ENCODE measurements at regions of chr5 and their contacts with region 1.

Region 1: GRCh38 chr5:5421961-5422818 is at the start of gene ICE1:
- DNase-seq: peak; percentile 95
- ATAC-seq: peak; percentile 91
- H3K4me3 Mint-ChIP-seq: peak within 1 kb of the TSS; percentile 90
- H3K27ac Mint-ChIP-seq: peak within 1 kb of the TSS; percentile 91
- H3K4me1 Mint-ChIP-seq: peaks cover 12% of the 10 kb centered on the region
- H3K27me3 Mint-ChIP-seq: no peaks in the 10 kb centered on the region
- total RNA-seq, gene ICE1: 26.5 to 27.4 TPM

Region 2: DNA sequence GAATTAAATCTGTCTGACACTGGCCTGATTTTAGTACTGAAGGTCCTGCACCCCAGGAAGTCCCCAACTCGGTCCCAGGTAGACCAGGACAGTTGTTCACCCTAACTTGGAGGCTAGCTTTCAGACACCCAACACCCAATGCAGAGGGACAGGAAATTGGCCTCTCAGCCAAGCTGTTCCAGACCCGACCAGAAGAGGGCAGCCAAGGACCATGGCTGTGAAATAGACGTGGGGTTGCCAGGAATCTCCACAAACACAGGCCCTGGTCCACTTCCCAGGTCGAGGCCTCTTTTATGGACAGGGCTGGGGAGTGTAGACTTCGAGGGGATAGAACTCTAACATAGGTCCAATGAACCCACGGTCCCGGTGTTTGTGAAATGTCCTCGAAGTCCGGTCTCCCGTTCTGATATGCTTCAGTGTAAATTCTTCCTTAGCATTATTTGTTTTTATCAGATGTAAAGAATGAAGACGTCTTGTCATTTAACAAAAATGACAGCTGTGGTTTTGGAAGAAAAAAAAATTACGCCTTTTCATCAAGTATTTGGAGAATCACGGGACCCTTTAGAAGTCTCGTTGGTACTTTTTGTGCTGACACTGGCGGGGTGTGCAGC is 542.4 kb before region 1 on chr5:
- CTCF ChIA-PET with region 1: interaction called, 3 read pairs
- POLR2A ChIA-PET with region 1: no interaction called
- intact Hi-C with region 1: loop called in 1 of 2 experiments (anchors 10 kb)
- DNase-seq: peak; percentile 78
- ATAC-seq: peak; percentile 53
- H3K4me3 Mint-ChIP-seq: no peak overlapping the region
- H3K27ac Mint-ChIP-seq: no peak overlapping the region
- H3K4me1 Mint-ChIP-seq: no peaks in the 10 kb centered on the region
- H3K27me3 Mint-ChIP-seq: no peaks in the 10 kb centered on the region

Region 3: DNA sequence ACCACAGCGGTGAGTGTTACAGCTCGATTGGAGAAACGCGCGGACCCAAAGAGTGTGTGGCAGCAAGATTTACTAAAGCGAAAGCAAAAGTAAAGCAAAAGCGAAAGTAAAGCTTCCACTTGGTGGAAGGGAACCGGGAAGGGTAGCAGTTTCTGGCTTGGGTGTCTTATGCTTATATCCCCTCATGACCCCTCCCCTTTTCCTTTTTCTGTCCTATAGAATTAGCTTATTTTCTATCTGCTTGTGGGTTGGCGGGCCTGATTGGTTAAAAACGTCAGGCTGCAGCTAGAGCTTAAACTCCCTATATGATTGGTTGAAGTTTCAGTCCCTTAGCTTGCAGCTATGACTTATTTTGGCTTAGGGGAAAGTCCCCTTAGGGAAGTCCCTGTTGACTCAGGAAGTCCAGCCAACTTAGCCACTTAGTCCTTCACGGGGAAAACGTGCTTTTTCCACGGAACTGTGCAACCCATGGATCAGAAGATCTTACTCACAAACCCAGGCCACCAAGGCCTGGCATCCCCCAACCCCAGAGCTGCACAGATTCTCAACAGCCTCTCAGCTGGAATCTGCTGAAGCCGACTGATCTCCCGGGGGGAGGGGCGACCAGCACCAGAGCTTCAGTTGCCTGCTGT is 396.3 kb before region 1 on chr5:
- CTCF ChIA-PET with region 1: no interaction called
- POLR2A ChIA-PET with region 1: no interaction called
- intact Hi-C with region 1: loop called in 1 of 2 experiments (anchors 5 kb)
- DNase-seq: peak; percentile 33
- ATAC-seq: no peak
- H3K4me3 Mint-ChIP-seq: no peak overlapping the region
- H3K27ac Mint-ChIP-seq: no peak overlapping the region
- H3K4me1 Mint-ChIP-seq: peaks cover 7% of the 10 kb centered on the region
- H3K27me3 Mint-ChIP-seq: no peaks in the 10 kb centered on the region

Region 4: GRCh38 chr5:5141625-5142532 is 280.3 kb before region 1 on chr5:
- CTCF ChIA-PET with region 1: interaction called, 4 read pairs
- POLR2A ChIA-PET with region 1: no interaction called
- intact Hi-C with region 1: loop called (anchors 1 kb)
- DNase-seq: peak; percentile 69
- ATAC-seq: no peak
- H3K4me3 Mint-ChIP-seq: no peak overlapping the region
- H3K27ac Mint-ChIP-seq: no peak overlapping the region
- H3K4me1 Mint-ChIP-seq: peaks cover 6% of the 10 kb centered on the region
- H3K27me3 Mint-ChIP-seq: peaks cover 22% of the 10 kb centered on the region

Region 5: GRCh38 chr5:5523066-5523505 is 100.9 kb after region 1 on chr5:
- CTCF ChIA-PET with region 1: no interaction called
- POLR2A ChIA-PET with region 1: no interaction called
- intact Hi-C with region 1: loop called in 1 of 2 experiments (anchors 1 kb)
- DNase-seq: peak; percentile 19
- ATAC-seq: peak; percentile 82
- H3K4me3 Mint-ChIP-seq: no peak overlapping the region
- H3K27ac Mint-ChIP-seq: peak overlapping the region; percentile 80
- H3K4me1 Mint-ChIP-seq: peaks cover 31% of the 10 kb centered on the region
- H3K27me3 Mint-ChIP-seq: no peaks in the 10 kb centered on the region